Heart left ventricle (tissue), 16 donors: ENCODE measurements at regions of chr9 and their contacts with region 1.

Region 1: GRCh38 chr9:126183266-126183665 is 143.4 kb upstream of the MVB12B start:
- DNase-seq: no peak
- ATAC-seq: no peak
- H3K4me3 ChIP-seq: no peak overlapping the region
- H3K27ac ChIP-seq: no peak overlapping the region
- H3K4me1 ChIP-seq: no peaks in the 10 kb centered on the region
- H3K27me3 ChIP-seq: peaks cover 0 to 39% (median 0%) of the 10 kb centered on the region in 9 donors
- CTCF ChIP-seq: no peak
- POLR2A ChIP-seq: no peak

Region 2: GRCh38 chr9:125810161-125810560 is 373.1 kb before region 1 on chr9:
- intact Hi-C with region 1: loop called in 1 of 10 experiments (anchors 5 kb)
- DNase-seq: no peak
- ATAC-seq: no peak
- H3K4me3 ChIP-seq: no peak overlapping the region
- H3K27ac ChIP-seq: no peak overlapping the region
- H3K4me1 ChIP-seq: peaks cover 0 to 9% (median 0%) of the 10 kb centered on the region in 12 donors
- H3K27me3 ChIP-seq: no peaks in the 10 kb centered on the region
- CTCF ChIP-seq: no peak
- POLR2A ChIP-seq: no peak

Region 3: GRCh38 chr9:126534431-126535186 is 351.3 kb after region 1 on chr9:
- intact Hi-C with region 1: no loop called
- DNase-seq: no peak
- ATAC-seq: no peak
- H3K4me3 ChIP-seq: no peak overlapping the region
- H3K27ac ChIP-seq: no peak overlapping the region
- H3K4me1 ChIP-seq: peaks cover 0 to 33% (median 3%) of the 10 kb centered on the region in 12 donors
- H3K27me3 ChIP-seq: peaks cover 0 to 23% (median 0%) of the 10 kb centered on the region in 9 donors
- CTCF ChIP-seq: no peak
- POLR2A ChIP-seq: no peak